Gastrocnemius medialis (tissue), 4 donors: ENCODE measurements at regions of chr9 and their contacts with region 1.

Region 1: DNA sequence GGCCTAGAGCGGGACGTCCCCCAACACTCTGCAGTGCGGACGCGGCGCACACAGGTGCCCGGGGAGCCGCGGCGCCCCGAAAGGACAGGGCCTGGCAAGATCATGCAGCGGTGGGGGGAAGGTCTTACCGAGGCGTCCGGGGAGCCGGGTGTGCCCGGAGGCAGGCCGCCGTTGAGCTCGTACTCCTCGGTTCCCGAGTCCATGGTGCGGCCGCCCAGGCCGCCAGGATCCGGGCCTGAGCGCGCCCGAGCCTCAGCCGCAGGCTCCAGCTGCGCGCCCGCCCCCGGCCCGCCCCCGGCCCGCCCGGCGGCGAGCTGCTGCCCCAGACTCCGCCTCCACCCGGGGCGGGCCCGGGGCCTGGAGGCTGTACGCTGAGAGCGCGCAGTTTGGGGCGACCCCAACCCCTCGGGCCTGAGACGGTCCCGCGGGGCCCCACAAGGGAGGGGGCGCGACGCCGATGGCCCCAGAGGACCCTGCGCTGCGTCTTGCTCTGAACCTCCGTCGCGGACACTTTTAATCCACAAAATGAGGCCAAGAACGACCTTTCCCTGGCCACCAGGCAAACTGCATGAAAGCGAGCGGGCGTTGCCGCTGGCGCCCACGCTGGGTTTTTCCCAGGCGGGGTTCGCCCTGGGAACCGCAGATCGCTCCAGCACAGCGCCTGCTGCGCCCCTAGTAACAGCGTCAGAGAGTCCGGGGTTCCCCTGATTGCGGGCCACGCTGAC is at the start of gene NINJ1:
- DNase-seq: peak; percentile 56 to 59
- ATAC-seq: peak; percentile 65 to 80
- H3K4me3 ChIP-seq: peak within 1 kb of the TSS; percentile 69 to 91 (median 86)
- H3K27ac ChIP-seq: peak within 1 kb of the TSS; percentile 95 to 99 (median 96)
- H3K4me1 ChIP-seq: peaks cover 57 to 63% of the 10 kb centered on the region in 2 donors
- H3K27me3 ChIP-seq: no peaks in the 10 kb centered on the region
- CTCF ChIP-seq: no peak
- POLR2A ChIP-seq: peak; percentile 87 to 94
- total RNA-seq, gene NINJ1: 28.5 to 58.5 (median 45.7) TPM

Region 2: DNA sequence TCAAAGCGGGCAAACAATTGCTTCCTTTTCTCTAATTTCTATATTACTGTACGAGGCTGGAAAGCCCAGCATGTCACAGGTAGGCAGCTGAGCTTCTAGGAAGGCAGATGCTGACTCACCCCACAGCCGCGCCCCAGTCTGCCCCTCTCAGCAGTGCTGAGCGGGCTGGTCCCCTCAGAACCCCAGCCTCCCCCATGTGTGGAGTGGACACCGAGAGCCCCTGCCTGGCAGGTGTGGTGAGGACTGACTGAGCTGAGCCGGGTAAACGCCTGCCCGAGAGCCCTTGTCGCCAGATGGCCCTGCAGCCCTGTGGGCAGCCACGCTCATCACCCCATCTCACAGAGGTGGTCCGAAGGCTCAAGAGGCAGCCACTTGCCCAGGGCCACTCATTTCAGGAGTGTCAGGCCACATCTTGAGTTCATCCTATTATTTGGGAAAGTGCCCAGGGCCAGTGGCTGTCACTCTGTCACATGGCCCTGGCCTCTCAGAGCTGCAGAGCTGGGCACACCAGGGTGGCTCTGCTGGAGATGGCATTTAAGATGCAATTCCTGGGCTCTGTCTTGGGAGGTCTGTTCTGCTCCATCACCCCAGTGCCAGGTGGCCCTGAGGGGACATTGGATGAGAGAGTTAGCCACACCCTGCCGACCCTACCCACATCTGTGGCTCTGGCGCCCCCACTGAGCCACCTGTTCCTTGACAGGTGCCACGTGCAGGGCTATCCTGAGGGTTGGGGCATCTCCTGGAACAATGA is 25.7 kb before region 1 on chr9:
- in situ Hi-C with region 1: no loop called
- intact Hi-C with region 1: loop called (anchors 2 kb)
- DNase-seq: peak in 1 of 2 donors; percentile 15
- ATAC-seq: no peak
- H3K4me3 ChIP-seq: no peak overlapping the region
- H3K27ac ChIP-seq: peak overlapping the region in 1 of 4 donors; percentile 16
- H3K4me1 ChIP-seq: peaks cover 3 to 11% of the 10 kb centered on the region in 2 donors
- H3K27me3 ChIP-seq: no peaks in the 10 kb centered on the region
- CTCF ChIP-seq: no peak
- POLR2A ChIP-seq: no peak